ENCODE measurements at regions of chr7 and their contacts with region 1.

Region 1: GRCh38 chr7:23161482-23161881 is 20.4 kb upstream of the NUP42 start:
- DNase-seq: no peak
- ATAC-seq: peak in 2 of 4 donors; percentile 43 to 72
- H3K4me3 ChIP-seq: no peak overlapping the region
- H3K27ac ChIP-seq: no peak overlapping the region
- H3K4me1 ChIP-seq: peaks cover 0 to 17% (median 0%) of the 10 kb centered on the region in 12 donors
- H3K27me3 ChIP-seq: no peaks in the 10 kb centered on the region
- CTCF ChIP-seq: no peak
- POLR2A ChIP-seq: no peak

Region 2: DNA sequence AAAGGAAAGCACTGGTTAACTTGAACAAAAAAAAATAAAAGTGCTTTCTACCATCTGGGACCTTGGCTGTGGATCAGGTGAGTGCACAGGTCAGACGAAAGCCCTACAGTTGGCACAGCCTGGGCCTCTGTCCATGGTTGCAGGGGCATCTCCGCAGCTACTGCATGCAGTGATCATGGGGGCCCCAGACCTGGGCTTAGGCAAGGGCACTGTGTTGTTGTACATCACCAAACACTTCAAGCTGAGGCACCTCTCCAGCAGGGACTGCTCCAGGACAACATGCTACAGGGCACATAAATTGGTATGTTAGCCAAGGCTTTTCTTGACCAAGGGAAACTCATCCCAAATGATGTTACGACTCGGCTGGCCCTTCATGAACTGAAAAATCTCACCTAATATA is 32.4 kb before region 1 on chr7:
- intact Hi-C with region 1: loop called in 1 of 10 experiments (anchors 5 kb)
- DNase-seq: peak; percentile 32 to 77 (median 48)
- ATAC-seq: peak; percentile 89 to 99 (median 94)
- H3K4me3 ChIP-seq: no peak overlapping the region
- H3K27ac ChIP-seq: peak overlapping the region in 11 of 12 donors; percentile 8 to 65 (median 45)
- H3K4me1 ChIP-seq: peaks cover 0 to 12% (median 0%) of the 10 kb centered on the region in 12 donors
- H3K27me3 ChIP-seq: no peaks in the 10 kb centered on the region
- CTCF ChIP-seq: no peak
- POLR2A ChIP-seq: no peak

Measured in heart left ventricle (tissue), 16 donors.